Mammary epithelial cell (primary cell): ENCODE measurements at regions of chr10 and their contacts with region 1.

Region 1: DNA sequence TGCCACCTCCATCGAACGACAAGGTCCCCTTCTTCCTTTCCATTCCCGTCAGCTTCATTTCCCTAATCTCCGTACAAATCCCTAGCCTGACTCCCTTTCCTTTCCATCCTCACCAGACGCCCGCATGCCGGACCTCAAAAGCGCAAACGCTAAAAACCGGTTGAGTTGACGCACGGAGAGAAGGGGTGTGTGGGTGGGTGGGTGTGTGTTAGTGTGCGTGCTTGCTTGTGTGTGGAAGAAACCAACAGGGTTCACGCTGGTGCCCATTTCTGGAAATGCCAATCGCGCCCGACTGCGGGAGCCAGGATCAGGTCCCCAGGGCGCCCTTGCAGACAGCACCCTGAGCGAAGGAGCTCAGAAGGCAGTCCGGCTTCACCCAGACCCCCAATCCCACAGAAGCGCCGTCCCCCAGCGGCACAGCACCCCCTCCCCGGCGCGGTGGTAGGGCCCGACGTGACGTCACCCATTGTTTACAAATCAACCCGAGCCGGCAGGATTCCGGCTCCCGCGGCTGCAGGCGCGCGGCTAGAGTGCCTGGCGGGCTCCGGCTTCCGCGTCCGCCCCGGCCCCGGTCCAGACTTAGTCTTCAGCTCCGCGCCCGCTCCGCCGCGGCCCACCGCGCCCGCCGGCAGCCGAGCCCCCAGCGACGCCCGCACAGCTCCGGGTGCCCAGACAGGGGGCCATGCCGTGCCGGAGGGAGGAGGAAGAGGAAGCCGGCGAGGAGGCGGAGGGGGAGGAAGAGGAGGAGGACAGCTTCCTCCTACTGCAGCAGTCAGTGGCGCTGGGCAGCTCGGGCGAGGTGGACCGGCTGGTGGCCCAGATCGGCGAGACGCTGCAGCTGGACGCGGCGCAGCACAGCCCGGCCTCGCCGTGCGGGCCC is at the start of gene FRAT1:
- DNase-seq: peak; percentile 89
- H3K4me3 ChIP-seq: peak within 1 kb of the TSS; percentile 78 to 92 (median 83)
- H3K27ac ChIP-seq: peak within 1 kb of the TSS; percentile 98
- H3K4me1 ChIP-seq: peaks cover 13% of the 10 kb centered on the region
- H3K27me3 ChIP-seq: peaks cover 2% of the 10 kb centered on the region
- CTCF ChIP-seq: no peak
- total RNA-seq, gene FRAT1: 1.5 to 2.4 TPM

Region 2: DNA sequence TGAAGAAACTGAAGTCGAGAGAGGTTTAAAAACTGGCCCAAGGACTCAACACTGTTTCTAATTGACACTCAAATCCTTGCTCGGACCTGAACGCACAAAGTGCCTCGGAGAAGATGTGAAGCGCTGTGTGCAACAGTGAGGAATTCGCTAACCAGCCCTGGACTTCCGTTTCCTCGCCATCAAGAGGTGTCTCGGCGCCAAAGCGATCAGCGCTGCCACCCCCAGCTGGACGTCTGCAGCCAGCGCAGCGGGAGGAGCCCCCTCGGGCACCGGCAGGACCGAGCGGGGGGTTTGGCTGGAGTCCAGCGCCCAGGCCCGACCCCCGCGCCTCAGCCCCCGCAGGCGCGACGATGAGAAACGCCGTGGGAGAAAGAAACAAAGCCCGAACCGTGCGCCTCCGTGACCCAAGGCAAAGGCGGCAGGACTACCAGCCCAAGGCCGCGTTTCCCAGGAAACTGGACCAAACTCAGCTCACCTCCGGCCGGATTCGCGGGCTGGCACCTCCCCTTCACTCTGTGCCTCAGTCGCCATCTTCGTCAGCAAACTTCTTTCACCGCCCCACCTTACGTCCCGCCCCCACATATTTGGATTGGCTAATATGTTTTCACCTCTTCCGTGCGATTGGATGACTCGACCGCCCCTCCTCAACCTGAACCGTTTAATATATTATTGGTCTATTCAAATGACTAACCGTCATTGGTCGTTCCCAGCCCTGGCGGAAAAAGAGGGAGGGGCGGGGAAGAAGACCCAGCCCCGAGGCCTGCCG is 26.7 kb before region 1 on chr10 and contains the start of gene ARHGAP19:
- CTCF ChIA-PET with region 1: no interaction called
- dilution Hi-C with region 1: no loop called
- in situ Hi-C with region 1: no loop called
- intact Hi-C with region 1: loop called (anchors 1 kb)
- DNase-seq: peak; percentile 99
- H3K4me3 ChIP-seq: peak within 1 kb of the TSS; percentile 77 to 95 (median 90)
- H3K27ac ChIP-seq: peak within 1 kb of the TSS; percentile 93
- H3K4me1 ChIP-seq: peaks cover 10% of the 10 kb centered on the region
- H3K27me3 ChIP-seq: no peaks in the 10 kb centered on the region
- CTCF ChIP-seq: peak; percentile 26 to 42
- total RNA-seq, gene ARHGAP19: 10.8 to 20.5 TPM

Region 3: GRCh38 chr10:97425964-97426775 is 107.2 kb after region 1 on chr10 and contains the start of gene PGAM1:
- CTCF ChIA-PET with region 1: no interaction called
- dilution Hi-C with region 1: no loop called
- in situ Hi-C with region 1: no loop called
- intact Hi-C with region 1: no loop called
- DNase-seq: peak; percentile 96
- H3K4me3 ChIP-seq: peak within 1 kb of the TSS; percentile 83 to 98 (median 97)
- H3K27ac ChIP-seq: peak within 1 kb of the TSS; percentile 86
- H3K4me1 ChIP-seq: peaks cover 16% of the 10 kb centered on the region
- H3K27me3 ChIP-seq: no peaks in the 10 kb centered on the region
- CTCF ChIP-seq: peak; percentile 61 to 83
- total RNA-seq, gene PGAM1: 380 to 517 TPM